Naive thymus-derived CD8-positive, alpha-beta T cell (primary cell): ENCODE measurements at regions of chr17 and their contacts with region 1.

Region 1: DNA sequence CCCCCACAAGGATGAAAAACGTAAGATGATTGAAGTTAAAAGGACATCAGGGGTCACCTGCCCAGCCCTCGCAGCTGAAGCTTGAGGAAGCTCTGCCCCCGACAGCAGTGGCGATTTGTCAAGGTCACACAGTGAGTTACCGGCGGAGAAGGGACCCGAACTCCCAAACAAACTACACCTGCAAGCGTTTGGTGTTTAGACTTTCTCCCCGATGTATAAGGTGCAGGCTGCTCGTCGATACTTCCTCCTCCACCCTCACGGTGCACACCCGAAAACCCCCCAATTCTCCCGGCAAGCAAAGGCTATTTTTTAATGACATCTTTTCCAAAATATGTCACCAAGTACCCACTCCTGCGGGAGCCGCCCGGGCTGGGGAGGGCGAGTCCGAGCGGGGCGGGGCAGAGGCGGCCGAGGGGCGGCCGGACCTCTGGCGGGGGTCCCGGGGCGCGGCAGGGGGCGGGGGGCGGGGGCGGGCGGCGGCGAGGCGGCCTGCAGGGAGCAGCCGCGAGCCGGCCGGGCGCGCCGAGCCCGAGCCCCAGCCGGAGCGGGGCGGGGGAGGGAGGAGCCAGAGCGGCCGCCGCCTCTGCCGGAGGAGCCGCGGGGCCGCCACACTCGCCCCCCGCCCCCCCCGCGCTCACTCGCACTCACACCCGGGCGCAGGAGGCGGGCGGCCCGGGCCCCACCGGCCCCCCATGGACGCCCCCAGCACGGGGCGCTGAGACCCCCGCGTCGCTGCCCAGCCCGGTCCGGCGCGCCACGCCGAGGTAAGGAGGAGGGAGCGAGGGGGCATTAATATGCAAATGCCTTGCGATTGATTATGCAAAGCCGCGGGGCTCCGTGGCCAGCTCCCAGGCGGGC is at the start of gene THRA:
- DNase-seq: peak; percentile 60 to 80 (median 72)
- ATAC-seq: peak; percentile 85 to 86
- H3K4me3 Mint-ChIP-seq: peak within 1 kb of the TSS; percentile 88 to 99 (median 92)
- H3K27ac Mint-ChIP-seq: peak within 1 kb of the TSS; percentile 88 to 96 (median 92)
- H3K4me1 Mint-ChIP-seq: peaks cover 36 to 53% (median 48%) of the 10 kb centered on the region in 4 donors
- H3K27me3 Mint-ChIP-seq: no peaks in the 10 kb centered on the region
- polyA plus RNA-seq, gene THRA: 11.3 to 23.3 (median 22.2) TPM

Region 2: DNA sequence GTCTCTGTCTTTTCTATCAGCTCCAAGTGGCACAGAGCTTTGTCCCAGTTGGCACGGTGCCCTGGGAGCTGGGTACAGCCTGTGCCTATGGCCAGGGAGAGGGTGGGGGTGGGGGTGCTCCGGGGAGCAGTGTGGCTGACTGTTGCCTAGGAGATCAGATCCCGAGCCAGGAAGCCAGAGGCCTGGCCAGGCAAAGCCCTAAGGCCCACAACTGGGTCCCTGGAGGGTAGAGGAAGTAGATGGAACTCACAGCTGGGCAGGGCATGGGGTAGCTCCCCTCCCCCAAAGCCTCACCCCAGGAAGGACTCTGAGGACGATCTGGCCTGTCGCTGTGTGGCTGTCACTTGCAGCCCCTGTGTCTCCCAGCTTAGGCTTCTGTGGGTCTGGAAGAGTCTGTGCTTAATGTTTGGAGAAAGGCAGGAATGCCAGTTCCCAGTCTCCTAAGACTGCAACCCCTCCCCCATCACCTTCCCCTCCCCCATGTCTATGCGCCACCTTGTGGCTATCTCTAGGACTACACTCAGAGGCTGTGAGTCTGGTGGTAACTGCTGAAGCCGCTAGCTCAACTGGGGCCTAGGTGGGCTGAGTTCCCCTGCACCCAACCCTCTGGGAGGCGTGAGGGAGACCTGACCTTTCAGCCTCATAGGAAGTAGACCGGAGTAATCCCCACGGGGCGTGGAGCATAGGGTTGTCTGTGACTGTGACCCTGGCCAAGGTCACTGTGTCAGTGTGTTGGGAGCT is 12.8 kb after region 1 on chr17:
- POLR2A ChIA-PET with region 1: interaction called, 79 read pairs
- DNase-seq: peak; percentile 45 to 83 (median 69)
- ATAC-seq: peak; percentile 73 to 85
- H3K4me3 Mint-ChIP-seq: peak overlapping the region; percentile 7 to 75 (median 62)
- H3K27ac Mint-ChIP-seq: peak overlapping the region; percentile 41 to 96 (median 80)
- H3K4me1 Mint-ChIP-seq: peaks cover 33 to 67% (median 62%) of the 10 kb centered on the region in 4 donors
- H3K27me3 Mint-ChIP-seq: no peaks in the 10 kb centered on the region

Region 3: GRCh38 chr17:40139566-40140058 is 77.1 kb after region 1 on chr17:
- POLR2A ChIA-PET with region 1: interaction called, 17 read pairs
- DNase-seq: peak in 1 of 10 donors; percentile 11
- ATAC-seq: peak in 1 of 2 donors; percentile 26
- H3K4me3 Mint-ChIP-seq: peak overlapping the region; percentile 86 to 98 (median 95)
- H3K27ac Mint-ChIP-seq: peak overlapping the region; percentile 95 to 100 (median 99)
- H3K4me1 Mint-ChIP-seq: peaks cover 14 to 51% (median 41%) of the 10 kb centered on the region in 4 donors
- H3K27me3 Mint-ChIP-seq: peaks cover 0 to 1% (median 0%) of the 10 kb centered on the region in 5 donors

Region 4: GRCh38 chr17:40167685-40168261 is 105.2 kb after region 1 on chr17:
- POLR2A ChIA-PET with region 1: no interaction called
- DNase-seq: no peak
- ATAC-seq: no peak
- H3K4me3 Mint-ChIP-seq: no peak overlapping the region
- H3K27ac Mint-ChIP-seq: peak overlapping the region; percentile 9 to 95 (median 84)
- H3K4me1 Mint-ChIP-seq: peaks cover 7 to 17% (median 9%) of the 10 kb centered on the region in 4 donors
- H3K27me3 Mint-ChIP-seq: no peaks in the 10 kb centered on the region